ENCODE measurements at regions of chr14 and their contacts with region 1.

Region 1: DNA sequence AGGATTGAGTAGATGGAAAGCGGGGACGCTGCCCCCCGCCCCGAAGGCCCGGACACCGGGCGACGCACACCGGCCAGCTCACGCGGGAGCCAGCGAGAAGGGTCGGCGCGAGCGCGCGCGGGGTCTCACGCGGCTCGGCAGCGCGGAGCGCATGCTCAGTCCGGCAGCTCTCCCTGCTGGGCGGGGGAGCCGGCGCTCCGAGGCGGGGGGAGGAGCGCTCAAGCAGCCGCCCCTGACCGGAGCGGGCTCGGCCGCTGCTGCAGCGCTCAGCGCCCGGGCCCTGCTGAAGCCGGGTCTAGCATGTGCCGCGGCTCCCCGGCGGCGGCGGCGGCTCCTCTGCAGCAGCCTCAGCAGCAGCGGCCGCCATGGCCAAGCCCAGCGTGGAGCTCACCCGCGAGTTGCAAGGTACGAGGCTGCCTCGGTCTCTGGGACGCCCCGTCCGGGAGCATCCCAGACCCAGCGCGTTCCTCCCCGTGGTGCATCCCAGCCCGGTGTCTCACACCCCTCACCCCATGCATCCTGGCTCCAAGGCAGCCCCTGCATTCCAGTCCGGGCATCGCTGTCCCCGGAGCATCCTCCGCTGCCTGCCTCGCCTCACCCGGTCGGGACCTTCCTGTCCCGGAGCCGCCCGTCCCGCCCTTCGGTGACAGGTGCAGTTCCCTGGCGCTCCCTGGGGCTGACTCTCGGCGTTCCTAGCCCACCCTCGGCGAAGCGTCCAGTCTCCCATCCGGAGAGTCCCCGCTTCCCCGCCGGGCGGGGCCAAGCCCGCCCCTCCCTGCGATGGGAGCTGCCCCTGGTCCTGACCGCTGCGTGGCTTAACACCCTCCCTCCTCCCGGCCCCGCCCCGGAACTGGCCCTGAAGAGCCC is at the start of gene CARMIL3:
- DNase-seq: peak; percentile 92
- H3K4me3 Mint-ChIP-seq: peak within 1 kb of the TSS; percentile 76
- H3K27ac Mint-ChIP-seq: peak within 1 kb of the TSS; percentile 76
- H3K4me1 Mint-ChIP-seq: peaks cover 20% of the 10 kb centered on the region
- H3K27me3 Mint-ChIP-seq: peaks cover 17% of the 10 kb centered on the region
- total RNA-seq, gene CARMIL3: 1.3 and 1.5 TPM in 2 replicates

Region 2: DNA sequence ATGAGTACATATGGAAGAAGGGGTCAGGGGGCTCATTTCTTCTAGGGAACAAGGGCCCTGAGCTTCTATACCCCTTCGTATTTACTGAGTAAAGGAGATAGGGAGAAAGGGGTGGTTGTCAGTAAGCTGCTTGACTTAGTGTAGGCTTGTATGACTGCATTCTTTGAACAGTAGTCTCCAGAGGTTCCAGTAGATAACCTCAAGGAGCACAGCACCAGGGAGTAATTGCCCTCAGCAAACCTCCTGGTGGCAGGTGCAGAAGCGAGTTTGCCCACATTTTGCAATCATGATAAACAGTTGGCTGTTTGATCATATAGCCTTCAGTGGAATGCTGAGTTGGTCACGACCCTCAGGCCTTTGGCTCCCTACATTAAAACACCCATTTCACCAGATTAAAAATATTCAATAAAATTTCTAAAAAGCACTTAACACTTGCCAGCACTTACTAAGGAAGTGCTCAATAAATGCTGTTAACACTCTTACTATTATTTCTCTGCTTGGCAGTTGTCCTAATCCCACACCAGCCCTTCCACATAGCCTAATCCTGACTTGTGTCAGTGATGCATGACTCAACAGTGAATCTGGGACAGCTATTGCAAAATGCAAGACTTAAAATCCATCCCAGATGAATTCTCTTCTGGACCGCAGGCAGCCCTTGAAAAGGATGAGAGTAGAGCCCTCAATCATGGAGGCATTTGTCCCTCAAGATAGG is 67.0 kb before region 1 on chr14:
- intact Hi-C with region 1: loop called (anchors 1 kb)
- DNase-seq: no peak
- H3K4me3 Mint-ChIP-seq: no peak overlapping the region
- H3K27ac Mint-ChIP-seq: no peak overlapping the region
- H3K4me1 Mint-ChIP-seq: peaks cover 26% of the 10 kb centered on the region
- H3K27me3 Mint-ChIP-seq: no peaks in the 10 kb centered on the region

Region 3: DNA sequence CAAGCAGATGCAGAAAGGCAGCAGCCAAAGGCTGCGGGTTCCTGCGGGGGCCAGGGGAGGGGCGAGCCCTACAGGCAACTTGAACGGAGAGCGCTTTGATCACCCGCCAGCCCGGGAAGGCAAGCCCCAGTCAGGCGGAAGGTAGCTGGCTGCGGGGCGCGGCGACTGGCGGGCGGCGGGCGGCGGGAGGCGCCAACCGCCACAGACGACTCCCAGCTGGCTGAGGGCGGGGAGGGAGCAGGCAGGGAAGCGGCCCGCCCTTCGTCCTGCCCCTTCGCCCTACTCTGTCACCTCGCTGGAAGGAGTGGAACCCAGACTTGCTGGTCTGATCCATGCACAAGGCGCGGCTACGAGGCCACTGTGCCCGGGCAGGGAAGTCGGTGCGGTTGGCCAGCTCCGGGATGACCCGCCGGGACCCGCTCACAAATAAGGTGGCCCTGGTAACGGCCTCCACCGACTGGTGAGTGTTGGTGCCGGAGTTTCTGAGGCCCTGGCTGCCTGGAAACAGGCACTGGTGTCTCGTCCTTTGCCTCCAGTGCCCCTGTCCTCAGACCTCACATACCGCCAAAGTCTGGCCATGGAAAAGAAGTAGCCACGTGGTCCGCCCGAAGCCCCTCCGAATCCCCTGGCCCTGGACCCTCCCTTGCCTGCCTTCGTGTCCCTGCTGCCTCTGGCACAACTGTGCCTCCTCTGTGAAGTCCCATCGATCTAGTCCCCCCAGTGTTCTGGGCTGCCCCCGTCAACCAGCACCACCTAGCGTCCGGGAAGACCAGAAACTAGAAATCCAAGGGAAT is 15.7 kb before region 1 on chr14:
- intact Hi-C with region 1: loop called (anchors 1 kb)
- DNase-seq: peak; percentile 91
- H3K4me3 Mint-ChIP-seq: peak overlapping the region; percentile 91
- H3K27ac Mint-ChIP-seq: peak overlapping the region; percentile 87
- H3K4me1 Mint-ChIP-seq: peaks cover 13% of the 10 kb centered on the region
- H3K27me3 Mint-ChIP-seq: peaks cover 3% of the 10 kb centered on the region

Region 4: GRCh38 chr14:24071144-24071697 is 19.2 kb after region 1 on chr14 and contains the start of gene CPNE6:
- intact Hi-C with region 1: loop called (anchors 1 kb)
- DNase-seq: no peak
- H3K4me3 Mint-ChIP-seq: no peak within 1 kb of the TSS
- H3K27ac Mint-ChIP-seq: peak within 1 kb of the TSS; percentile 34
- H3K4me1 Mint-ChIP-seq: peaks cover 20% of the 10 kb centered on the region
- H3K27me3 Mint-ChIP-seq: peaks cover 8% of the 10 kb centered on the region
- total RNA-seq, gene CPNE6: not detected in 2 replicates